ENCODE measurements at regions of chr16 and their contacts with region 1.

Region 1: DNA sequence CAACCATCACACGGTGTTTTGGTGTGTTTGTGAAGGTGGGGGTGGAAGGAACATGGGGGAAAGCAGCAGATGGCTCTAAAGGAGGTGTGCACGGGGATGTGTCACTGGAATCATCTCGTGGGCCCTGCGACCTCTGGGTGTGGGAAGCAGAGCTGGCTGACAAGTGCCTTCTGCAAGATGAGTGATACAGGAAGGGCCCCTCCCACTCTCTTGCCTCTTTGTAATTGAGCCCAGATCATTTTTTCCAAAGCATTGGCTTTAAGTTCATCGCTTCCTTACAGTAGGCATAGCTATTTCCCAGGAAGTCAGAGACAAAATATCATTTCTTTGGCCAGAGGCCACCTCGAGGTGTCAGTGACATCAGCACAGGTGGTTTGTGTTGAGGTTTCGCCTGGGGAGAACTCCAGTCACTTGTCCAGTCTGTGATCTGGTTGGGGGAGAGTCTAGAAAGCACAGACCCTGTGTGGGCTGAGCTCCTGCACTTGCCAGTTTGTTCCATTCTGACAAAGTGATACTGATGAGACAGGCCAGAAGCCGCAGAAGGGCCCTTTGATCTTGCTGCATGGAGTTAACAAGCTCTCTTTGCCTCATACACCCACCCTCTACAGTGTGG is 20.6 kb upstream of the SNTB2 start:
- DNase-seq: peak; percentile 49
- H3K4me3 ChIP-seq: no peak overlapping the region
- H3K27ac ChIP-seq: peak overlapping the region; percentile 43
- H3K4me1 ChIP-seq: peaks cover 39% of the 10 kb centered on the region
- H3K27me3 ChIP-seq: no peaks in the 10 kb centered on the region
- CTCF ChIP-seq: no peak
- POLR2A ChIP-seq: no peak

Region 2: DNA sequence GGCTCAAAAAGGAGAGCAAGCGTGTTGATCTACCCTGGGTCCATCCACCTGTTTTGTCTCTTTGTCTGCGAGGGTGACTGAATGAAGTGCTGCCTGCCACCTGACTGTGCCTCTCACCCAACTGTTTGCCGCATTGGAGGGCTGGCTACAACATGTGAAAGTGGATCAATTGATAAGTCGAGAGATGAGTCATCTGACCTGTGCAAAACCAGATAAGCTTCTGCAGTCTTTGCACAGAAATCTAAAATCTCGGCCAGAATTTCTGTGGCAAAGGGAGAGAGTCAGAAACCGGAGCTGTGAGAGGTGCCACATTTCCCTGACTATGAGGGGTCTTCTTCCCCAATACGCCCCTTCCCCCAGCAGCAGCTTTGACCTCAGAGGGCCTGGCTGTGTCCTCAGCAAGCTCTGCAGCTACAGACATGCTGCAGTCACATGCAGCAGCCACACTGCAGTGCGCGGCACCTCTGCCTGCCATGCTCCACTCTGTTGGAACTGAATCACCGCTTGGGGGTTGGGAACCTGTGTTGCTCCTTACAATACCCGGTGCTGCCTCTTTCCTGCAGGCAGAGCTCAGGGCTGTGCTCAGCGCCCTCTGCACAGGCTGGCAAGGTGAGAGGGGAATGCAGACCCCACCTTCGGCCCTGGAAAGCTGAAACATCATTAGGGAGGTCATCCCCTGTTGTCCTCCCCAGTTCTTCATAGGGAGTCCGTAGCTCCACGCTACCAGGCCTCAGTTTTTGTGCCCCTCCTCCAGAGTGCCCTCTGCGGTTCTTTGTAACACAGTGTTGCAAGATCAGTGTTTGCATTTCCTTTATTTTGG is 77.0 kb before region 1 on chr16:
- CTCF ChIA-PET with region 1: no interaction called
- POLR2A ChIA-PET with region 1: no interaction called
- dilution Hi-C with region 1: no loop called
- intact Hi-C with region 1: no loop called
- DNase-seq: peak; percentile 65
- H3K4me3 ChIP-seq: no peak overlapping the region
- H3K27ac ChIP-seq: no peak overlapping the region
- H3K4me1 ChIP-seq: peaks cover 5% of the 10 kb centered on the region
- H3K27me3 ChIP-seq: no peaks in the 10 kb centered on the region
- CTCF ChIP-seq: no peak
- POLR2A ChIP-seq: no peak

Region 3: DNA sequence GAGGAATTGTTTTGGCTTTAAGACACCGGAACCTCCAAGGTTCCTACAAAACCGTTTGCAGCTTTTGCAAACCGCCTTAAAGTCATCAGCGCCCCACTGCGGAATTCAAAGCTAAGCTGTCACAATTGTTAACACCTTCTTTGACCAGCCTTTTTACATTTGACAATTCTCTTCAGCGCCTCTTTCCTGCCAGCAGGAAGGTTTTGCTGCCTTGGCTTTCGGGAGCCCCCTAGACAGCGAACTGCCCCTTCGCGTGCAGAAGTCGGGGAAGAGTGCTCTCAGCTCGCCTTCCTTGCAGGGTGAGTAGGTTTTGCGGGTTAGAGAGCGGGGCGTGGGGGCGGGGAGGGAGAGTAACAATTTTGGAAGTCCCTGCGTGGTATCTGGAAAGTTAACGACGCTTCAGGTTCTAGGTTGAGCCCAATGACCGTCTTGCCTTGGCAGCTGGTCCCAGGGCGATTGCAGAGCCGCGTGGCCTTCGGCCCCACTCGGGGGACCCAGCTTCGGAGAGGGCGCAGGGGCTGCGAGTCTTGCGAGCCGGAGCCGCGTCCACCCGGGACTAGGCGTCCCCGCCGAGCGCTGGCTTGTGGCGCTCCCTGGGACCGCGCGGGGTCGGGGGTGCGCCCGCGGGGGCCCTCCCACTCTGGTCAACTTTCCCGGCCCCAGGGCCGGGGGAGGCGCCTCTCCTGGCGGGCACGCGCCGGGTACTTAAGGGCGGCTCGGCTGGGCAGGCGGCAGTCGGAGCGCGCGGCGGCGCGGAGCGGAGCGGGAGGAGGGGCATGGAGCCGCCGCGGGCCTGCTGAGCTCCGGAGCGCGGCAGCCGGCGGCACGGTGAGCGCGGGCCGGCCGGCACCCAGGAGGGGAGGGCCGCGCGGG is 60.6 kb before region 1 on chr16 and contains the start of gene HAS3:
- CTCF ChIA-PET with region 1: no interaction called
- POLR2A ChIA-PET with region 1: no interaction called
- dilution Hi-C with region 1: no loop called
- intact Hi-C with region 1: no loop called
- DNase-seq: peak; percentile 69
- H3K4me3 ChIP-seq: peak within 1 kb of the TSS; percentile 40 to 57 (median 54)
- H3K27ac ChIP-seq: no peak within 1 kb of the TSS
- H3K4me1 ChIP-seq: peaks cover 21% of the 10 kb centered on the region
- H3K27me3 ChIP-seq: no peaks in the 10 kb centered on the region
- CTCF ChIP-seq: peak; percentile 16 to 32
- POLR2A ChIP-seq: peak; percentile 57
- total RNA-seq, gene HAS3: 1.8 TPM in 2 replicates

Region 4: GRCh38 chr16:69143116-69143515 is 23.2 kb before region 1 on chr16:
- CTCF ChIA-PET with region 1: no interaction called
- POLR2A ChIA-PET with region 1: no interaction called
- dilution Hi-C with region 1: no loop called
- intact Hi-C with region 1: no loop called
- DNase-seq: no peak
- H3K4me3 ChIP-seq: no peak overlapping the region
- H3K27ac ChIP-seq: no peak overlapping the region
- H3K4me1 ChIP-seq: no peaks in the 10 kb centered on the region
- H3K27me3 ChIP-seq: no peaks in the 10 kb centered on the region
- CTCF ChIP-seq: no peak
- POLR2A ChIP-seq: no peak

Region 5: DNA sequence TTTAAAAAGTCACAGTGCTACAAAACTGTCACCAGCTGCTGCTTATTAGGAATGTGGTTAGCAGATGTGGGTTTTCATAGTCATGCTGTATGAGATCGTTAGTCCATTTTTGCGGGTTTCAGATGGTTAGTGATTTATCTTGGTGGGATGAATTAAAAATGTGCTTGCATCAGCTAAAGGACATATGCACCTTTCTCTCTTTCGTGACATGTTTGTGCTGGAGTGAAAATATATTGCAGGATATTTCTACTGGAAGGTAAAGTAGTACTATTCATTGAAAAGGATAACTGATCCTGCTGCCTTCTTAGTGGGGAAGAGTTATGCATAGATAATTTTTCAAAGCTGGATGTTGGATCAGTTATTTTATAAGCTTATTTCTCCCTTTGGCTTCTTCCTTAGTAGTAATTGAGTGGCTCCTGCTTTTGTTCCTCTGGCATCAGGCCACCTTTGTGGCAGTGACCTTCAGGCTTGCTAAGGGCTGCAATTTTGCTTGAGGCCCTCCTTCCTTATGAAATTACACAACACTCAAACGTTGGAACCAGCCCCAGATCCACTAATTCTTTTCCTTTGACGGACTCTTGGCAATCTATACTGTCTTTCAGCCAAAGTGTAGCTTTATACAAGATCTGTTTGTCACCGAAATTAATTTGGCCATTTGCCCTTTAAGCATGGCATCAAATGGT is 13.1 kb after region 1 on chr16:
- CTCF ChIA-PET with region 1: interaction called, 11 read pairs
- POLR2A ChIA-PET with region 1: interaction called, 8 read pairs
- dilution Hi-C with region 1: no loop called
- intact Hi-C with region 1: no loop called
- DNase-seq: peak; percentile 89
- H3K4me3 ChIP-seq: no peak overlapping the region
- H3K27ac ChIP-seq: no peak overlapping the region
- H3K4me1 ChIP-seq: peaks cover 12% of the 10 kb centered on the region
- H3K27me3 ChIP-seq: no peaks in the 10 kb centered on the region
- CTCF ChIP-seq: no peak
- POLR2A ChIP-seq: no peak

Region 6: DNA sequence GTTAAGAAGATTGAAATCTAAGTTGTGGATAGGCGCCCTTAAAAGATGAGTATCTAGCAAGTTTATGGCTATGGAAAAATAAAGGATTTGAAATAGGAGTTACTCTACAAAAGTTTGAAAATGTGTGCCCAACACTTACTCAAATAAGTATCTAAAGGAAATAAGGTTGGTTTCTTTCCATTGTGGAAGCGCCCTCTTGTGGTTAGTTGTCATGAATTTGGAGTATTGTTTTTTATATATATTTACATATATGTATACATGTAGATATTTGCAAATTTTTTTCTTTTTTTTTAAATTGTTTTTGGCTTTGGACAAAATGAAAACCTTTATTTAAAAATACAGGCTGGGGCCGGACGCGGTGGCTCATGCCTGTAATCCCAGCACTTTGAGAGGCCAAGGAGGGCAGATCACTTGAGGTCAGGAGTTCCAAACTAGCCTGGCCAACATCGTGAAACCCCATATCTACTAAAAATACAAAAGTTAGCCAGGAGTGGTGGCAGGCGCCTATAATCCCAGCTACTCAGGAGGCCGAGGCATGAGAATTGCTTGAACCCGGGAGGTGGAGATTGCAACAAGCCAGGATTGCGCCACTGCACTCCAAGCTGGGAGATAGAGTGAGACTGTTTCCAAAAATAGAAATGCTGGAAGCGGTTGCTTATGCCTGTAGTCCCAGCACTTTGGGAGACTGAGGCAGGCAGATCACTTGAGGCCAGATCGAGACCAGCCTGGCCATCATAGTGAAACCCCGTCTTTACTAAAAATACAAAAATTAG is 120.8 kb after region 1 on chr16:
- CTCF ChIA-PET with region 1: interaction called, 19 read pairs
- POLR2A ChIA-PET with region 1: no interaction called
- dilution Hi-C with region 1: no loop called
- intact Hi-C with region 1: loop called (anchors 5 kb)
- DNase-seq: peak; percentile 84
- H3K4me3 ChIP-seq: no peak overlapping the region
- H3K27ac ChIP-seq: no peak overlapping the region
- H3K4me1 ChIP-seq: peaks cover 8% of the 10 kb centered on the region
- H3K27me3 ChIP-seq: no peaks in the 10 kb centered on the region
- CTCF ChIP-seq: peak; percentile 14 to 22
- POLR2A ChIP-seq: no peak

Measured in endothelial cell of umbilical vein (primary cell).